K562 (cell line): ENCODE measurements at regions of chr9 and their contacts with region 1.

Region 1: GRCh38 chr9:128818099-128818838 is at the start of gene ENDOG:
- DNase-seq: peak; percentile 97 to 100 (median 98)
- ATAC-seq: peak; percentile 87
- H3K4me3 ChIP-seq: peak within 1 kb of the TSS; percentile 70
- H3K27ac ChIP-seq: peak within 1 kb of the TSS; percentile 84
- H3K4me1 ChIP-seq: peaks cover 4 to 51% of the 10 kb centered on the region in 2 experiments; a peak in 3 of 5 replicates
- H3K27me3 ChIP-seq: no peaks in the 10 kb centered on the region
- CTCF ChIP-seq: peak; percentile 89 to 98 (median 97)
- EP300 ChIP-seq: no peak
- POLR2A ChIP-seq: peak; percentile 94
- RAD21 ChIP-seq: peak; percentile 38 to 47
- polyA plus RNA-seq, gene ENDOG: 1.2 to 3.8 TPM

Region 2: DNA sequence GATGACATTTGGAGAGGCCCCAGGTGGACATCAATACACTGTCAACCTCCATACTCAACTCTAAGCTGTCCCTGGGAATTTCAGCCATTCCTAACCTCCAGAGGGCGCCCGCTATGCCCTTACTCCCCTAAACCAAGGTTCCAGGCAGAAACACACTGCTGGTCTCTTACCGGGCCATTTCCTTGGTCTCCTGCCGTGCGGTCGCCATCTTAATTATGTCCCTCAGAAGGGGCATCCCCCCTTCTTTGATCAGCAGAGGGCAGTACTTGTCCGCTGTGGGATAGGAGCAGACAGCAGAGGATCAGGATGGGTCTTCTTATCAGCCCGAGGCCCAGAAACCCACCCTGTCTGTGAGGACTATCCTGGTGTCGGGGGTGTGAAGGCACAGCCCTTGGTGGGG is 85.0 kb before region 1 on chr9:
- CTCF ChIA-PET with region 1: interaction called, 5 read pairs
- POLR2A ChIA-PET with region 1: interaction called, 3 read pairs
- in situ Hi-C with region 1: no loop called
- intact Hi-C with region 1: loop called (anchors 1 kb)
- DNase-seq: peak; percentile 82 to 95 (median 88)
- ATAC-seq: peak; percentile 96
- H3K4me3 ChIP-seq: no peak overlapping the region
- H3K27ac ChIP-seq: peak overlapping the region; percentile 29
- H3K4me1 ChIP-seq: peaks cover 5 to 30% of the 10 kb centered on the region in 2 experiments; a peak in 4 of 5 replicates
- H3K27me3 ChIP-seq: no peaks in the 10 kb centered on the region
- CTCF ChIP-seq: peak; percentile 91 to 98 (median 91)
- EP300 ChIP-seq: no peak
- POLR2A ChIP-seq: no peak
- RAD21 ChIP-seq: peak; percentile 87 to 89

Region 3: DNA sequence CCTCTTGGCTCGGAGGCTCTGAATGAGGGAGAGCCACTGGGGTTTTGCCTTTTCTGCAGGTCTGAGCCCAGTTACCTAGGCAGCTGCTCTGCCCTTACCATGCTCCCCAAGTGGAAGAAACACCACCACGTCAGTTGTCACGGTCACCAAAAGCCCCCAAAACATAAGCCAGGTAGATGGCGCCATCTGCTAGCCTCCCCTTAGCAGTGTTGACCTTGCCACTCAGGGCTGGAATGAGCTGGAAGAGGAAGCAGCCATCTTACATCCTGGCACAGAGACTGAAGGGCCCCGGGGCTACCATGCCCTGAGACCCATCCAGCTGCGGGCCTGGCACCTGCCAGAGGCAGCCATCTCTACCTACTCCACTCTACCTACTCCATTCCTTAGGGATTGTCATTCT is 53.9 kb before region 1 on chr9:
- CTCF ChIA-PET with region 1: no interaction called
- POLR2A ChIA-PET with region 1: no interaction called
- in situ Hi-C with region 1: no loop called
- intact Hi-C with region 1: loop called (anchors 5 kb)
- DNase-seq: peak in 1 of 4 experiments; percentile 38
- ATAC-seq: peak; percentile 38; the same call in 2 of the 3 replicates
- H3K4me3 ChIP-seq: no peak overlapping the region
- H3K27ac ChIP-seq: no peak overlapping the region
- H3K4me1 ChIP-seq: peaks cover 13% of the 10 kb centered on the region in 2 experiments; a peak in 4 of 5 replicates
- H3K27me3 ChIP-seq: no peaks in the 10 kb centered on the region
- CTCF ChIP-seq: peak; percentile 27 to 42 (median 38); a peak in 3 of 6 replicates
- EP300 ChIP-seq: no peak
- POLR2A ChIP-seq: no peak
- RAD21 ChIP-seq: peak in 1 of 2 experiments; percentile 43; a peak in 1 of 4 replicates

Region 4: GRCh38 chr9:128829477-128830251 is 11.4 kb after region 1 on chr9 and contains the start of gene SPOUT1:
- CTCF ChIA-PET with region 1: no interaction called
- POLR2A ChIA-PET with region 1: interaction called, 48 read pairs
- in situ Hi-C with region 1: no loop called
- intact Hi-C with region 1: no loop called
- DNase-seq: peak; percentile 95 to 99 (median 98)
- ATAC-seq: peak; percentile 99
- H3K4me3 ChIP-seq: peak within 1 kb of the TSS; percentile 80
- H3K27ac ChIP-seq: peak within 1 kb of the TSS; percentile 73
- H3K4me1 ChIP-seq: peaks cover 5 to 33% of the 10 kb centered on the region in 2 experiments; a peak in 4 of 5 replicates
- H3K27me3 ChIP-seq: no peaks in the 10 kb centered on the region
- CTCF ChIP-seq: no peak
- EP300 ChIP-seq: no peak
- POLR2A ChIP-seq: peak; percentile 91
- RAD21 ChIP-seq: no peak
- polyA plus RNA-seq, gene SPOUT1: 10.6 to 13.2 TPM

Region 5: DNA sequence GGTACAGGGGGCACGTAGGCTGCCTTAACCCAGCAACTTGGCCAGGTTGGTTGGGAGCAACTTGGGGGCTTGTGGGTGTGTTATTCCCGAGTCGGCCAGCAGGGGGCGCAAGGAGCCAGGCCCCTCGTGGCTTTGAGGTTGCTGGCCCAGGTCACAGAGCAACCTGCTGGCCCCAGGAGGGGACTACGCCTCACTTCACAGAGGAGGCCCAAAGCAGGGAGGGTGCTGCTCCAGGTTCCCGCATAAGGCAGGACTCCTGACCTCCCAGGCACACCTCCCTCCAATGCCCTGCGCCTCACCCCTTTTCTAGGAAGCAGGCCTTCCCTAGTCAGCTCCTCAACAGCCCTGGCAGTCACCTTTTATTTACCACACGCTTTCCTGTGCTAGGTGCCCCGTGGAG is 45.4 kb after region 1 on chr9:
- CTCF ChIA-PET with region 1: no interaction called
- POLR2A ChIA-PET with region 1: no interaction called
- in situ Hi-C with region 1: no loop called
- intact Hi-C with region 1: loop called (anchors 5 kb)
- DNase-seq: peak; percentile 83 to 93 (median 89)
- ATAC-seq: peak; percentile 99
- H3K4me3 ChIP-seq: no peak overlapping the region
- H3K27ac ChIP-seq: peak overlapping the region; percentile 10; the same call in 1 of the 3 replicates
- H3K4me1 ChIP-seq: peaks cover 10 to 11% of the 10 kb centered on the region in 2 experiments; a peak in 4 of 5 replicates
- H3K27me3 ChIP-seq: no peaks in the 10 kb centered on the region
- CTCF ChIP-seq: peak; percentile 93 to 99 (median 97)
- EP300 ChIP-seq: no peak
- POLR2A ChIP-seq: no peak
- RAD21 ChIP-seq: peak; percentile 80 to 89